Motor neuron (in vitro differentiated cells): ENCODE measurements at regions of chr2 and their contacts with region 1.

Region 1: GRCh38 chr2:102020596-102021181 is 28.9 kb downstream of the IL1R2 start:
- ATAC-seq: peak; percentile 96 to 100 (median 98)
- H3K4me3 ChIP-seq: no peak overlapping the region
- H3K27ac ChIP-seq: no peak overlapping the region
- H3K4me1 ChIP-seq: no peaks in the 10 kb centered on the region

Region 2: GRCh38 chr2:101883863-101884262 is 136.8 kb before region 1 on chr2:
- in situ Hi-C with region 1: no loop called
- ATAC-seq: peak in 3 of 8 experiments; percentile 40 to 61 (median 49)
- H3K4me3 ChIP-seq: no peak overlapping the region
- H3K27ac ChIP-seq: no peak overlapping the region
- H3K4me1 ChIP-seq: no peaks in the 10 kb centered on the region

Region 3: GRCh38 chr2:102166189-102166845 is 145.6 kb after region 1 on chr2:
- in situ Hi-C with region 1: loop called in 2 of 9 experiments (anchors 10 to 25 kb)
- ATAC-seq: peak; percentile 39 to 94 (median 63)
- H3K4me3 ChIP-seq: no peak overlapping the region
- H3K27ac ChIP-seq: no peak overlapping the region
- H3K4me1 ChIP-seq: no peaks in the 10 kb centered on the region

Region 4: GRCh38 chr2:102240640-102241370 is 220.1 kb after region 1 on chr2:
- in situ Hi-C with region 1: loop called in 1 of 9 experiments (anchors 10 kb)
- ATAC-seq: peak; percentile 83 to 100 (median 98)
- H3K4me3 ChIP-seq: no peak overlapping the region
- H3K27ac ChIP-seq: no peak overlapping the region
- H3K4me1 ChIP-seq: peaks cover 0 to 3% of the 10 kb centered on the region in 2 donors

Region 5: DNA sequence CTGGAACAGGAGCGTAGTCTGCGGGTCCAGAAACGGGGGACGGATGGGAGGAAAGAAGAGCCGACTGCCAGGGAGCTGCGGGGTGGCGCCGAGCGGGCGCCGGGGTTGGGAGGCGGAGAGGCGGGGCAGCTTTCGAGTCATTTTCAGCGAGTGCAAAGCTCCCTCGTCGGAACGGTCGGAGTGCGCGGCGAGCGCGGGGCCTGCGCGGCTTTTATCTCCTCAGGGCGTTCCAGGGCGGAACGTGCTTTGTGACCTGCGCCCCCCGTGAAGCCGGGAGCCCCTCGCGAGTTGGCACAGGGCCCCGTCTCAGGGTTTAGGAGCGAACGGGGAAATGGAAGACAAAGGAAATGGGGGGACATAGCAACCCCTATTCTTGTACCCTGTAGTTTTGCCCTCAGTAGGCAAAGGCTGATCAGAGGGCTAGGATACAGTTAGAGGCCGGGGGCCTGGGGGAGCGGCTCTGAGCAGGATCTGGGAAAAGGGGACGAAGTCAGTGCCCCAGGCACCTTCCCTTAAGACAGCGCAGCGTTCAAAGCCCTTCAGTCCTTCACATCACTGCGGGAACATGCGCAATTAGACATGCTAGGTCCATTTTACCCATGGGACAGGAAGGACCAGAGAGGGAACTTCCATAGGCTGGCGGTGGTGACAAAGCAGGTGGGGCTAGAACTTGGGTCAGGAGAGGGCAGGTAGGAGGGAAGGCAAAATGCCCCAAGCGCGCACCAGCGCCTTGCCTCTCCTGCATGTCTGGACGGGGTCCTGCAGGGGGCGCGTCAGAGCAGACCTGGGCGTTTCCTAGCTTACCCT is 230.6 kb after region 1 on chr2:
- in situ Hi-C with region 1: loop called in 2 of 9 experiments (anchors 10 to 25 kb)
- ATAC-seq: peak; percentile 31 to 84 (median 48)
- H3K4me3 ChIP-seq: peak overlapping the region in 4 of 5 donors; percentile 6 to 23 (median 16)
- H3K27ac ChIP-seq: no peak overlapping the region
- H3K4me1 ChIP-seq: no peaks in the 10 kb centered on the region

Region 6: GRCh38 chr2:102442967-102443828 is 422.5 kb after region 1 on chr2:
- in situ Hi-C with region 1: loop called in 3 of 9 experiments (anchors 10 to 25 kb)
- ATAC-seq: peak in 3 of 8 experiments; percentile 61 to 88 (median 75)
- H3K4me3 ChIP-seq: no peak overlapping the region
- H3K27ac ChIP-seq: no peak overlapping the region
- H3K4me1 ChIP-seq: no peaks in the 10 kb centered on the region